ENCODE measurements at regions of chr2 and their contacts with region 1.

Region 1: GRCh38 chr2:32010670-32011484 is at the start of gene MEMO1:
- DNase-seq: peak; percentile 91
- ATAC-seq: peak; percentile 77
- H3K4me3 Mint-ChIP-seq: peak within 1 kb of the TSS; percentile 91
- H3K27ac Mint-ChIP-seq: peak within 1 kb of the TSS; percentile 95
- H3K4me1 Mint-ChIP-seq: peaks cover 27% of the 10 kb centered on the region
- H3K27me3 Mint-ChIP-seq: no peaks in the 10 kb centered on the region
- total RNA-seq, gene MEMO1: 43.5 to 43.8 TPM

Region 2: GRCh38 chr2:32039447-32040219 is 28.8 kb after region 1 on chr2 and contains the start of gene DPY30:
- POLR2A ChIA-PET with region 1: interaction called, 19 read pairs
- DNase-seq: peak; percentile 92
- ATAC-seq: peak; percentile 94
- H3K4me3 Mint-ChIP-seq: peak within 1 kb of the TSS; percentile 94
- H3K27ac Mint-ChIP-seq: peak within 1 kb of the TSS; percentile 96
- H3K4me1 Mint-ChIP-seq: peaks cover 10% of the 10 kb centered on the region
- H3K27me3 Mint-ChIP-seq: no peaks in the 10 kb centered on the region
- total RNA-seq, gene DPY30: 57.8 to 66.7 TPM